ENCODE measurements at regions of chr1 and their contacts with region 1.

Region 1: GRCh38 chr1:211654838-211655787 is 20.3 kb downstream of the NEK2 start:
- DNase-seq: peak; percentile 95
- H3K4me3 Mint-ChIP-seq: no peak overlapping the region
- H3K27ac Mint-ChIP-seq: no peak overlapping the region
- H3K4me1 Mint-ChIP-seq: peaks cover 26% of the 10 kb centered on the region
- H3K27me3 Mint-ChIP-seq: no peaks in the 10 kb centered on the region
- CTCF ChIP-seq: peak; percentile 100

Region 2: DNA sequence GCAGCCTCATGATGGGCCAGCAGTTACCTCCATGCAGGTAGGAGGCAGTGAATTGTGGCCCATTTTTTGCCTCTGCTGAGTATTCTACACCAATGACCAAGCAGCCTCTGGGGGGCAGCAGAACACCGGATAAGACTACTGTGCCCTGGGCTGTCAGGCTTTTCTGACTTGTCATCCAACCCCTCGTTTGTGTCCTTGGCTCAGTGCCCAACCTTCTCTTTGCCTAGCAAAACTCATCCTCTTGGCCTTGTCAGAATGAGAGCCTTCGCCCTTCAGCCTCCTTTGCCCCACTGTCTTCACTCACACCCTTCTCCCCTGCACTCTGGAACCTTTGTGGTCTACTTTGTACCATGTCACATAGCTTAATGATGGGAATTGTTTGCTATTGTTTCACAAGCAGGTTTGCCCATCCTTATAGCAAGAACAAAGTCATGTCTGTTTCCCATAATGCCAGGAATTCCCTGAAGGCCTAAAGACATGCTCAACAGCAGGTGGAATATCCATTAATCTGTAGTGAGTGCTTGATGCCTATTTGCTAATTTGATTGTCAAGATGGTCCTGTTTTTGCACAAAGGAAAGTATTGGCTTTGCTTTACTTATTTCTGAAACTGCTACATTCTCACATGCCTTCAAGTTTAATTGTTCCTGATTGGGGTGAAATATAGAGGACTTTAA is 1070.5 kb before region 1 on chr1:
- CTCF ChIA-PET with region 1: no interaction called
- POLR2A ChIA-PET with region 1: no interaction called
- intact Hi-C with region 1: loop called (anchors 1 kb)
- DNase-seq: peak; percentile 97
- H3K4me3 Mint-ChIP-seq: no peak overlapping the region
- H3K27ac Mint-ChIP-seq: no peak overlapping the region
- H3K4me1 Mint-ChIP-seq: peaks cover 6% of the 10 kb centered on the region
- H3K27me3 Mint-ChIP-seq: no peaks in the 10 kb centered on the region
- CTCF ChIP-seq: peak; percentile 100

Region 3: GRCh38 chr1:211469938-211470529 is 185.1 kb before region 1 on chr1:
- CTCF ChIA-PET with region 1: interaction called, 119 read pairs
- POLR2A ChIA-PET with region 1: no interaction called
- intact Hi-C with region 1: loop called (anchors 1 kb)
- DNase-seq: peak; percentile 92
- H3K4me3 Mint-ChIP-seq: no peak overlapping the region
- H3K27ac Mint-ChIP-seq: no peak overlapping the region
- H3K4me1 Mint-ChIP-seq: peaks cover 15% of the 10 kb centered on the region
- H3K27me3 Mint-ChIP-seq: no peaks in the 10 kb centered on the region
- CTCF ChIP-seq: peak; percentile 98

Region 4: GRCh38 chr1:211541720-211542453 is 113.2 kb before region 1 on chr1:
- CTCF ChIA-PET with region 1: interaction called, 20 read pairs
- POLR2A ChIA-PET with region 1: no interaction called
- intact Hi-C with region 1: no loop called
- DNase-seq: no peak
- H3K4me3 Mint-ChIP-seq: no peak overlapping the region
- H3K27ac Mint-ChIP-seq: no peak overlapping the region
- H3K4me1 Mint-ChIP-seq: peaks cover 17% of the 10 kb centered on the region
- H3K27me3 Mint-ChIP-seq: no peaks in the 10 kb centered on the region
- CTCF ChIP-seq: no peak

Region 5: DNA sequence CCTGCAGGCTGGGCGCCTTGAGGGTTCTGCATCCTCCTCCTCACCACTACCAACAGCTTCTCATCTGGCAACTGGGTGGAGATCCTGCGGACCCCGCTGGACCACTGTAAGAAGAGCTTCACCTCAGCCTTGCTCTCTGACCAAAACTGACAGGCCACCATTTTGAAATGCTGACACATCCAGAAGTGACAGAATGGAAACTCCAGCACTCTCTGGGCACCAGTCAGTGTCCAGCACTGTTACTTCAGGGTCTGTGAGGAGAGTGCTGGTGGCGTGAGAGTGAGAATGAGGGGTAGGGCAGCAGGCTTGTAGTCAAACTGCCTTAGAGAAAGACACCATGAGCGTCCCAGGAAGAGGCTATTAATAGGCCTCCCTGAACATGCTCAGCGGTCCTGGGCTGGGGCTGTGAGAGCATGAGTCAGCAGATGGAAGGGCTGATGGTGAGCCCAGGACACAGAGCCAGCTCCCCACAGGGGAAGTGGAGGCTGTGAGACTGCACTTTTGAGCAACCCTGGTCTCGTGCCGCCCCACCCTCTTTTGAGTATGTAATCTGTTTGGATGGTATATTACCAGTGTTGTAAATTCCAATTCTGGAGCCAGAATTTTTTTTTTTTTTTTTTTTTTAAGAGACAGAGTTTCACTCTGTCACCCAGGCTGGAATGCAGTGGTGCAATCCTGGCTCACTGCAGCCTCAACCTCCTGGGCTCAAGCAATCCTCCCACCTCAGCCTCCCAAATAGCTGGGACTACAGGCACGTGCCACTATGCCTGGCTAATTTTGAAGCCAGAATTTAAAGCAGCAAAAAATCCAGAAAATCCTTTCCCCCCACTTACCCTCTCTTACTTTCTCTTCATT is 41.8 kb before region 1 on chr1:
- CTCF ChIA-PET with region 1: interaction called, 36 read pairs
- POLR2A ChIA-PET with region 1: no interaction called
- intact Hi-C with region 1: loop called (anchors 1 kb)
- DNase-seq: peak; percentile 100
- H3K4me3 Mint-ChIP-seq: peak overlapping the region; percentile 33
- H3K27ac Mint-ChIP-seq: peak overlapping the region; percentile 61
- H3K4me1 Mint-ChIP-seq: peaks cover 37% of the 10 kb centered on the region
- H3K27me3 Mint-ChIP-seq: no peaks in the 10 kb centered on the region
- CTCF ChIP-seq: no peak

Region 6: GRCh38 chr1:211667065-211667617 is 12.0 kb after region 1 on chr1:
- CTCF ChIA-PET with region 1: interaction called, 31 read pairs
- POLR2A ChIA-PET with region 1: interaction called, 4 read pairs
- intact Hi-C with region 1: no loop called
- DNase-seq: no peak
- H3K4me3 Mint-ChIP-seq: no peak overlapping the region
- H3K27ac Mint-ChIP-seq: no peak overlapping the region
- H3K4me1 Mint-ChIP-seq: peaks cover 8% of the 10 kb centered on the region
- H3K27me3 Mint-ChIP-seq: no peaks in the 10 kb centered on the region
- CTCF ChIP-seq: no peak

Measured in MCF 10A (cell line).